ENCODE measurements at regions of chr11 and their contacts with region 1.

Region 1: DNA sequence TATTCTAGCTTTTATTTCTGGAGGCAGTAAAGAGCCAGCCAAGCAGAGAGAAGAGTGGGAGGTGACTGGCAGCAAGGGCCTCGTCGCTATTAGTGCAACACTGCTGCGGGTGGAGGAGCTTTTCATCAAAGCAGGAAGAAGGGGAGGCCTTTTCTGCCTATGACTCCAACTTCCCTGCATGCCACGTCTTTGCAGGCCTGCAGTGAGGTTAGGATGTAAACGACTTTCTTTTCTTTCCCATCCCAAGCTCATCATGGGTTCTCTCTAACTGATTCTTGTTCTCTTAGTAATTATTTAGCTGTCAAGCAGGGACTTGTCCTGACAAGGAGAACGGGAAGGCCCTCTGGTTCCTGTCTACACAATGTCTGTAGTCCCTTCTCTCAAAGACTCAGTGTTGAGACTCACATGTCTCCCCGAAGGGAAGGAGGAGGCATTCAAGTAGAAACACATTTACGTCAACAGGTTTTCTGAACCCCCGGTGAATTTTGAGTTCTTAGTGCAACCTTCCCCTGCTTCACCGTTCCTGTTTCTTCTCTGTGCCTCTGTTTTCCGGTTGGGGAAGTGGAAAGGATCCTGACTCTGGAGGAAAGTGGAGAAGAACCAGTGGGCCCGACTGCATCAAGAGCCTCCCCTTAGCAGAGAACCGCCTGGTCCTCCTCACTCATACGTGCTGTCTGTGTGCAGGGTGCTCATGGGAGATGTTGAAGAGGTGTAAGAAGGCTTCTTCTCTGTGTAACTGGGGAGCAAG is 56.9 kb downstream of the PACS1 start:
- DNase-seq: no peak
- ATAC-seq: peak; percentile 93

Region 2: GRCh38 chr11:66069715-66070603 is 57.0 kb before region 1 on chr11 and contains the start of gene PACS1:
- intact Hi-C with region 1: loop called (anchors 5 kb)
- DNase-seq: peak; percentile 92
- ATAC-seq: peak; percentile 89
- total RNA-seq, gene PACS1: 50.7 TPM